ENCODE measurements at regions of chr5 and their contacts with region 1.

Region 1: GRCh38 chr5:164504141-164504772 is 998.8 kb downstream of the MAT2B start:
- DNase-seq: peak; percentile 81
- H3K4me3 Mint-ChIP-seq: no peak overlapping the region
- H3K27ac Mint-ChIP-seq: peak overlapping the region; percentile 61
- H3K4me1 Mint-ChIP-seq: peaks cover 10% of the 10 kb centered on the region
- H3K27me3 Mint-ChIP-seq: no peaks in the 10 kb centered on the region
- CTCF ChIP-seq: peak; percentile 95

Region 2: GRCh38 chr5:163564321-163564938 is 939.8 kb before region 1 on chr5:
- CTCF ChIA-PET with region 1: interaction called, 67 read pairs
- POLR2A ChIA-PET with region 1: interaction called, 3 read pairs
- intact Hi-C with region 1: loop called (anchors 1 kb)
- DNase-seq: peak; percentile 85
- H3K4me3 Mint-ChIP-seq: no peak overlapping the region
- H3K27ac Mint-ChIP-seq: no peak overlapping the region
- H3K4me1 Mint-ChIP-seq: peaks cover 37% of the 10 kb centered on the region
- H3K27me3 Mint-ChIP-seq: no peaks in the 10 kb centered on the region
- CTCF ChIP-seq: peak; percentile 87

Region 3: DNA sequence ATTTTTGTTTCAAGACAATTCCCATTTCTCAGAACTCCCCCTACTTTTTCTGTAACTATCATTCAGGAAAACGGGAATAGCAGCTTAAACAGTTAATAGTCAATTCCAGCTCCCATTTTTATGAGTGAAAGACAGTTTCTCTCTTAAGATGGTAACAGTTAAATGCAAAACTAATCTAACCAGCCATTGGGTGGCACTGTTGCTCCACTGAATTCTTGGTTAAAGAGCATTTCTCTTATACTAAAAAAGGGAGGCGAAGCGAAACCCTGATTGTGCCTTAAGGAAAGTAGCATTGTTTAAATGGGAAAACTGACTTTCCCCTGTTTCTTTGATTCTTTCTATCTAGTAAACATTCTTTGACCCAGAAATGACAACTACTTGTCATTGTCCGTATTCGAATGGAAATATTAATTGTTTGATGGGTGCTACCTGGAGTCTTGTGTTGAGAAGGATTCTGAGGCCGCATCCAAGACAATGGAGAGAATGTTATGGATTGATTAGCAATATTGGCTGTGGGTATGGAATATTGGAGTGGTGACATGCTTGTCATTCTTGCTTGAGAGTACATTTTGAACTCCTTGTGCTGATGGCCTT is 491.1 kb before region 1 on chr5:
- CTCF ChIA-PET with region 1: interaction called, 89 read pairs
- POLR2A ChIA-PET with region 1: interaction called, 3 read pairs
- intact Hi-C with region 1: loop called (anchors 1 kb)
- DNase-seq: peak; percentile 91
- H3K4me3 Mint-ChIP-seq: no peak overlapping the region
- H3K27ac Mint-ChIP-seq: no peak overlapping the region
- H3K4me1 Mint-ChIP-seq: no peaks in the 10 kb centered on the region
- H3K27me3 Mint-ChIP-seq: no peaks in the 10 kb centered on the region
- CTCF ChIP-seq: peak; percentile 80

Region 4: GRCh38 chr5:164048359-164048926 is 455.8 kb before region 1 on chr5:
- CTCF ChIA-PET with region 1: interaction called, 31 read pairs
- POLR2A ChIA-PET with region 1: no interaction called
- intact Hi-C with region 1: loop called (anchors 1 kb)
- DNase-seq: peak; percentile 45
- H3K4me3 Mint-ChIP-seq: no peak overlapping the region
- H3K27ac Mint-ChIP-seq: no peak overlapping the region
- H3K4me1 Mint-ChIP-seq: no peaks in the 10 kb centered on the region
- H3K27me3 Mint-ChIP-seq: no peaks in the 10 kb centered on the region
- CTCF ChIP-seq: peak; percentile 61

Region 5: DNA sequence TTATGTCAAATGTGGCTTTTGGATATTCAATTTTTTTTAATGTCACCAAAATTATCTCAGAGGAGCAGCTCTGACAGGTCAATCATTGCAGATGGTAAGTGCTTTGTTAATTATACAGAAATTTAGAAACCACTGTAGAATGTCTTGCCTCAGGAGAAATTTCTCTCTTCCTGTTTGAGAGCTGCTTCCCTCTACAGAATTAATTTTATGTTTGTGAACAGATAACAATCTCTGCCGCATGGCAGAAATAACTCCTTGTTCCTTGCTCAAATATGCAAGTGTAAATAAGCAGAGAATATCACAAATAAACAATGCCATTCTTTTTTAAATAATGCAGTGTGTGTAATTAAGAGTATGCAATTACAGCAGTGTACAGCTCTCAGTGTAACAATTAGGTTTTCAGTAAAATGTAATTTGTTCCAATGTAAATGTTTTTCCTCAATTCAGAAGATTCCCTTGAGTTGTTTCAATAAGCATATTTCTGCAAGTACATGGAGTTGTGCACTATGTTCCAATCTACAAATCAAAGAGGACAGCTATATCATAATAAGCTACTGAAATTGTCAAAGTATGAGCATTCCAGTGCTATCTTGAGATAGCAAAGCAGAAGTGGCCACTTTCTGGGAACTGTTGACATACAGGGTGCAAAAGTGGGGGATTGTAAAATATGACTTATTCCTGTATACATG is 13.9 kb after region 1 on chr5:
- CTCF ChIA-PET with region 1: interaction called, 59 read pairs
- POLR2A ChIA-PET with region 1: no interaction called
- intact Hi-C with region 1: no loop called
- DNase-seq: no peak
- H3K4me3 Mint-ChIP-seq: no peak overlapping the region
- H3K27ac Mint-ChIP-seq: no peak overlapping the region
- H3K4me1 Mint-ChIP-seq: no peaks in the 10 kb centered on the region
- H3K27me3 Mint-ChIP-seq: no peaks in the 10 kb centered on the region
- CTCF ChIP-seq: no peak

Region 6: DNA sequence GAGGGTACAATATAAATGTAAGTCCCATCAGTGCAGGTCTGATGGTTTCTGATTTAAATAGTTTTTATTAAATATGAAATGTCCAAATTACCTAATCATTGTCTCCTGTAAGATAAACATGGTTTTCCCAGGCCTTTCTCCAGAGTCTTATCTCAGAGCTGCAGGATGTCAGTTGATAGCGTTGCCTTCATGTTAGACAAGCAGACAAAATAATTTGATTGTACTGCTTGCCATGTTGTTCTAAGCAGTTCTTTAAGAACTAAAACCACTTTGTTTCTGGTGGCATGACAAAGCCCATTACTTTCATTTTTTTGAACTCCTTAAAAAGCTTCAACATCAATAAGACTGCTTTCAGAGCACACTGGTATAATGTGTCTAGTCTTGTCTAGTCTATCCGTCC is 74.7 kb after region 1 on chr5:
- CTCF ChIA-PET with region 1: no interaction called
- POLR2A ChIA-PET with region 1: no interaction called
- intact Hi-C with region 1: no loop called
- DNase-seq: no peak
- H3K4me3 Mint-ChIP-seq: no peak overlapping the region
- H3K27ac Mint-ChIP-seq: no peak overlapping the region
- H3K4me1 Mint-ChIP-seq: no peaks in the 10 kb centered on the region
- H3K27me3 Mint-ChIP-seq: no peaks in the 10 kb centered on the region
- CTCF ChIP-seq: no peak

Region 7: DNA sequence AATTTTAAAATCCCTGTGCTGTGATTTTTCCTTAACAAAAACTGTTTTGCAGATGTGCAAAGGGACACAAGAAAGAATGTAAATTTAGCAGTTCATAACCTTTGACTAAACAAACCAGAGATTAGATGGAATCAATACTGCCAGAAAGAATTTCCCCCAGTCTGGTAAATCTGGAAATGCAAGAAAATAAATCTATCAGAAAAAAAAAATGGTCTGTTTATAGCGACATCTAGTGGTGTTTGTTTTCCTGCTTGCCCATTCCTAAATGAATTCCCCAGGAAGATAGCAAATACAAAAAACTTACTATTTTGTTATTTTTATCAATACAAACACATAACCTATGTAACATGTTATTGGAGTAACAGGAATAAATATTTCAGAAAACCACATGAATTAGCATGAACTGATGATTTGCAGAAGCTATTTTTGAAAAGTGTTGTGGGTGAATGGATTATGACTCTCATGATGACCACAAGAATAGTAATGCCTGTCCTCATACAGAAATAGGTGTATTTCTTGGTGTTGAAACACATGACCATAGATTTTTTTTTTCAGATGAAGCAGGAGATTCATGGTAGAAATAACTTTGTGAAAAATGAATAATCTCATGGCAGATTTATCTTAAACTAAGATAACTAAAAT is 705.0 kb after region 1 on chr5:
- CTCF ChIA-PET with region 1: interaction called, 9 read pairs
- POLR2A ChIA-PET with region 1: no interaction called
- intact Hi-C with region 1: loop called (anchors 10 kb)
- DNase-seq: peak; percentile 55
- H3K4me3 Mint-ChIP-seq: no peak overlapping the region
- H3K27ac Mint-ChIP-seq: no peak overlapping the region
- H3K4me1 Mint-ChIP-seq: no peaks in the 10 kb centered on the region
- H3K27me3 Mint-ChIP-seq: no peaks in the 10 kb centered on the region
- CTCF ChIP-seq: peak; percentile 66

Measured in MCF 10A (cell line).